Activated CD4-positive, alpha-beta memory T cell treated with anti-CD3 and anti-CD28 coated beads for 36 hours (primary cell): ENCODE measurements at regions of chr18 and their contacts with region 1.

Region 1: GRCh38 chr18:36067055-36067957 is at the start of gene RPRD1A:
- DNase-seq: peak; percentile 98
- H3K4me3 Mint-ChIP-seq: peak within 1 kb of the TSS; percentile 92
- H3K27ac Mint-ChIP-seq: peak within 1 kb of the TSS; percentile 94
- H3K4me1 Mint-ChIP-seq: peaks cover 36% of the 10 kb centered on the region
- H3K27me3 Mint-ChIP-seq: no peaks in the 10 kb centered on the region
- total RNA-seq, gene RPRD1A: 25.9 to 29.6 TPM

Region 2: GRCh38 chr18:36034299-36034895 is 32.9 kb before region 1 on chr18:
- CTCF ChIA-PET with region 1: no interaction called
- POLR2A ChIA-PET with region 1: interaction called, 3 read pairs
- intact Hi-C with region 1: loop called (anchors 1 kb)
- DNase-seq: no peak
- H3K4me3 Mint-ChIP-seq: no peak overlapping the region
- H3K27ac Mint-ChIP-seq: no peak overlapping the region
- H3K4me1 Mint-ChIP-seq: peaks cover 35% of the 10 kb centered on the region
- H3K27me3 Mint-ChIP-seq: no peaks in the 10 kb centered on the region

Region 3: DNA sequence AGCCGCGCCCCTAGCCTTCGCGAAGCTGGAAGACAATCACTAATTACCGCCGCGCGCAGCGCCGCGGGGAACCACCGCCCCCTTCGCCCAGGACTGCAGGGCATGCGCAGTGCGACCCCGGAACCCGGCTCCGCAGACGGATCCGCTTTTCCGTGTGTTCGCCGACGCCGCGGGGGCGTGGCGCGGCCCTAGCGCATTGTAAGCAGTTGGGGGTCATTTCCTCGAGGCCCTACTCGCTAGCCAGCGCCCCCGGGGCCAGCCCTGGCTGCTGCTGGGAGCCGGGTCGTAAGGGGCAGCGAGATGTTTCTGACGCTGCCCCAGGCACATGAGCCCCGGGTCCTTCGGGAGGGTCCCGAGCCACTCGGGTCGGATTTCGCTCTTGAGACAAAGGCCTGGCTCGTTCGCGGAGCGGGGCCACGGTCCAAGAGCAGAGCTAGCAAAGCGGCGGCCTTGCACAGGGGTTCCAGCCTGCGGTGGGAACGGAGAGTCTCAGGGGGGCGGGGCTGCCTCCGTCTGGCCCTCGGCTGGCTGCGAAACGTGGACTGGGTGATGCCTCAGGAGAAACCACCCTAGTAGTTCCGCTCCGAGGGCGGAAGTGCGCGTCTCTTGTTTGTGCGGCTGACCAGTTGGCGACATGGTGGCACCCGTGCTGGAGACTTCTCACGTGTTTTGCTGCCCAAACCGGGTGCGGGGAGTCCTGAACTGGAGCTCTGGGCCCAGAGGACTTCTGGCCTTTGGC is 62.2 kb after region 1 on chr18 and contains the starts of genes ELP2 and SLC39A6:
- CTCF ChIA-PET with region 1: no interaction called
- POLR2A ChIA-PET with region 1: interaction called, 3 read pairs
- intact Hi-C with region 1: loop called (anchors 1 kb)
- DNase-seq: peak; percentile 95
- H3K4me3 Mint-ChIP-seq: peak within 1 kb of the TSS; percentile 94
- H3K27ac Mint-ChIP-seq: peak within 1 kb of the TSS; percentile 95
- H3K4me1 Mint-ChIP-seq: peaks cover 60% of the 10 kb centered on the region
- H3K27me3 Mint-ChIP-seq: no peaks in the 10 kb centered on the region
- total RNA-seq, gene ELP2: 83.7 to 84.4 TPM
- total RNA-seq, gene SLC39A6: 23.7 to 24.3 TPM

Region 4: DNA sequence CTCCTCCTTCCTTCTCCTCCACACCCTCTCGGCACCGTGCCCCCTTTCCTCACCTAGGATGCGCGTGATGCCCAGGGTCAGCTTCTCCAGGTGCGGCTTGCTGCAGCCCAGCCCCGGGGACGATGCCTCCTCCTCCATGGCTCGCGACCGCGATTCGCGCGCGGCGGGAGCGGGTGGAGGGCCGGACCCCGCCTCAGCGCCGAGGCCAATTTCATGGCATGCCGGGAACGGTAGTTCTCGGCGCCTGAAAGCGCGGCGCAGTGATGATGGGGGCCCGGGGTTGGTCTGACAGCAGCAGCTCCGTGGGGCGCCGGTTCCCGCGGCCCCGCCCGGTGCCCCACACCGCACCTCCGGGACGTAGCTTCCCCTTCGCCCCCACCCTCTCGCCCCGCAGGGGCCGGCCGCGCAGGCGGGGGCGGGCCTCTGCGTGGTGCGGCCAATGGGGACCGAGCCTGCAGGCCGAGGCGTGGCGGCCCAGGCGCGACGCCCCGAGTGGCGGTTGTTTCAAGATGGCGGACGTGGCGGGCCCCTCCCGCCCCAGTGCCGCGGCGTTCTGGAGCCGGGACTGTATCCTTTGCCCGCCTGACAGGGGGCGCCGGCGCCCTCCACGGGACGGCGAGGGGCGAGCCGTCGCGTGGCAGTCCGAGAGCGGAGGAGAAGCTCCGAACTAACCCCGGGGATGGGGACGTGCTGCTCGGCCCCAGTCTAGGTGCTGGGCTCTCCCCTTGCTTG is 761.5 kb after region 1 on chr18 and contains the starts of genes KIAA1328 and TPGS2:
- CTCF ChIA-PET with region 1: interaction called, 3 read pairs
- POLR2A ChIA-PET with region 1: no interaction called
- intact Hi-C with region 1: loop called (anchors 1 kb)
- DNase-seq: peak; percentile 93
- H3K4me3 Mint-ChIP-seq: peak within 1 kb of the TSS; percentile 98
- H3K27ac Mint-ChIP-seq: peak within 1 kb of the TSS; percentile 91
- H3K4me1 Mint-ChIP-seq: peaks cover 38% of the 10 kb centered on the region
- H3K27me3 Mint-ChIP-seq: no peaks in the 10 kb centered on the region
- total RNA-seq, gene KIAA1328: 7.3 to 7.8 TPM
- total RNA-seq, gene TPGS2: 77.9 to 83.0 TPM